Sigmoid colon (tissue), 7 donors: ENCODE measurements at regions of chr10 and their contacts with region 1.

Region 1: GRCh38 chr10:72692057-72692910 is at the start of gene MCU:
- DNase-seq: peak; percentile 97
- H3K4me3 ChIP-seq: peak within 1 kb of the TSS; percentile 47 to 84 (median 65)
- H3K27ac ChIP-seq: peak within 1 kb of the TSS; percentile 84 to 89 (median 86)
- H3K4me1 ChIP-seq: peaks cover 0 to 36% (median 27%) of the 10 kb centered on the region in 4 donors
- H3K27me3 ChIP-seq: no peaks in the 10 kb centered on the region
- CTCF ChIP-seq: no peak
- EP300 ChIP-seq: no peak
- POLR2A ChIP-seq: peak in 1 of 2 donors; percentile 11
- total RNA-seq, gene MCU: 14.7 to 19.4 (median 18.2) TPM

Region 2: GRCh38 chr10:72107325-72108003 is 584.8 kb before region 1 on chr10:
- intact Hi-C with region 1: no loop called
- DNase-seq: no peak
- H3K4me3 ChIP-seq: no peak overlapping the region
- H3K27ac ChIP-seq: no peak overlapping the region
- H3K4me1 ChIP-seq: no peaks in the 10 kb centered on the region
- H3K27me3 ChIP-seq: no peaks in the 10 kb centered on the region
- CTCF ChIP-seq: no peak
- EP300 ChIP-seq: no peak
- POLR2A ChIP-seq: no peak

Region 3: DNA sequence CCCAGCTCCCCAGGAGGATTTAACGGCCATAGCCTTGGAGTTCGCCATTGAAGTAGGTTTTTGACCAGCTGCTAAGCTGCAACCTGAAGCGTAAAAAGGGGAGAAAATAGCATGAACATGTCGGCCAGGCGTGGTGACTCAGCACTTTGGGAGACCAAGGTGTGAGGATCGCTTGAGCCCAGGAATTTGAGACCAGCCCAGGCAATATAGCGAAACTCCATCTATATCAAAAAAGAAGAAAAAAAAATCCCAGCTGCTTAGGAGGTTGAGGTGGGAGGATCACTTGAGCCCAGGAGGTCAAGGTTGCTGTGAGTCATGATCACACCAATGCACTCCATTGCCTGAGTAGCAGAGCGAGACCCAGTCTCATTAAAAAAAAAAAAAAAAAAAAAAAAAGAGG is 32.6 kb before region 1 on chr10:
- intact Hi-C with region 1: no loop called
- DNase-seq: no peak
- H3K4me3 ChIP-seq: no peak overlapping the region
- H3K27ac ChIP-seq: no peak overlapping the region
- H3K4me1 ChIP-seq: no peaks in the 10 kb centered on the region
- H3K27me3 ChIP-seq: no peaks in the 10 kb centered on the region
- CTCF ChIP-seq: no peak
- EP300 ChIP-seq: no peak
- POLR2A ChIP-seq: no peak

Region 4: GRCh38 chr10:72834183-72834825 is 142.0 kb after region 1 on chr10:
- intact Hi-C with region 1: loop called (anchors 2 kb)
- DNase-seq: peak; percentile 74
- H3K4me3 ChIP-seq: no peak overlapping the region
- H3K27ac ChIP-seq: no peak overlapping the region
- H3K4me1 ChIP-seq: peaks cover 0 to 23% (median 0%) of the 10 kb centered on the region in 4 donors
- H3K27me3 ChIP-seq: no peaks in the 10 kb centered on the region
- CTCF ChIP-seq: peak; percentile 31 to 64 (median 60)
- EP300 ChIP-seq: no peak
- POLR2A ChIP-seq: no peak